PC-3 (cell line): ENCODE measurements at regions of chrX and their contacts with region 1.

Region 1: DNA sequence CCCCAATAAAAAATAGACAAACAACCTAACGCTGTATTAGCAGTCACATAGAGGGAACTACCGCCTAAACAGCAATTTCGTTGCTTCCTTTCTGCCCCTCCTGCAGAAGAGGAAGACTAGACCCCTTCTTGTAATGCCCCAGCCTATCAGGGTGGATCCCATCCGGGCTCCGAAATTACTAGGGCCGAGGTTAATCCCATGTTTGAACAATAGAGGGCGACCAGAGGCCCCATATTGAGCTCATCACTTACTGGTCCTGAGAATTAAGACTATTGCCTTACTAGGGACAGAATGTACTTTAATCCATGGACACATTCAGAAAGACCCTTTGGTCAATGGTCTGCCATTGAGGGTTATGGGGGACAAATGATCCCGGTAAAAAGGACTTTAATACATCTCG is 11.8 kb upstream of the ZNF630 start:
- DNase-seq: peak; percentile 73
- ATAC-seq: peak; percentile 78
- H3K4me3 ChIP-seq: no peak overlapping the region
- H3K27ac ChIP-seq: peak overlapping the region; percentile 50
- H3K4me1 ChIP-seq: peaks cover 18% of the 10 kb centered on the region; the same call in 1 of the 2 replicates
- H3K27me3 ChIP-seq: no peaks in the 10 kb centered on the region
- CTCF ChIP-seq: peak; percentile 76

Region 2: DNA sequence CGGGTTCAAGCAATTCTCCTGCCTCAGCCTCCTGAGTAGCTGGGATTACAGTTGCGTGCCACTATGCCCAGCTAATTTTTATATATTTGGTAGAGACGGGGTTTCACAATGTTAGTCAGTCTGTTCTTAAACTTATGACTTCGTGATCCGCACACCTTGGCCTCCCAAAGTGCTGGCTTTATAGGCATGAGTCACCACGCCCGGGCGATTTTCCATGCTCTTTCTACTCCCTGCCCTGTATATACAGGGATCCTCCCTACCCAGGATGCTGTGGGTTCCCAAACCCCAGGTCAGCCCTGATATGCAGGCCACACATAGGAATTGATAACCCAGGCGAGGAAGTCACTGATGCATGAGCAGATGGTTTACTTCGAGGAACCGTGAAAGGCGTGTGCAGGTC is 82.0 kb after region 1 on chrX:
- CTCF ChIA-PET with region 1: no interaction called
- POLR2A ChIA-PET with region 1: no interaction called
- intact Hi-C with region 1: loop called (anchors 1 kb)
- DNase-seq: peak; percentile 90
- ATAC-seq: peak; percentile 99
- H3K4me3 ChIP-seq: no peak overlapping the region
- H3K27ac ChIP-seq: peak overlapping the region; percentile 90
- H3K4me1 ChIP-seq: peaks cover 17% of the 10 kb centered on the region
- H3K27me3 ChIP-seq: no peaks in the 10 kb centered on the region
- CTCF ChIP-seq: no peak

Region 3: GRCh38 chrX:48278958-48279357 is 195.7 kb after region 1 on chrX:
- CTCF ChIA-PET with region 1: no interaction called
- POLR2A ChIA-PET with region 1: no interaction called
- intact Hi-C with region 1: loop called (anchors 10 kb)
- DNase-seq: peak; percentile 2
- ATAC-seq: no peak
- H3K4me3 ChIP-seq: no peak overlapping the region
- H3K27ac ChIP-seq: no peak overlapping the region
- H3K4me1 ChIP-seq: no peaks in the 10 kb centered on the region
- H3K27me3 ChIP-seq: no peaks in the 10 kb centered on the region
- CTCF ChIP-seq: no peak

Region 4: GRCh38 chrX:48493890-48494364 is 410.7 kb after region 1 on chrX:
- CTCF ChIA-PET with region 1: interaction called, 4 read pairs
- POLR2A ChIA-PET with region 1: no interaction called
- intact Hi-C with region 1: loop called (anchors 1 kb)
- DNase-seq: peak; percentile 48
- ATAC-seq: no peak
- H3K4me3 ChIP-seq: no peak overlapping the region
- H3K27ac ChIP-seq: no peak overlapping the region
- H3K4me1 ChIP-seq: peaks cover 49% of the 10 kb centered on the region
- H3K27me3 ChIP-seq: no peaks in the 10 kb centered on the region
- CTCF ChIP-seq: peak; percentile 59

Region 5: GRCh38 chrX:48511561-48511960 is 428.3 kb after region 1 on chrX:
- CTCF ChIA-PET with region 1: no interaction called
- POLR2A ChIA-PET with region 1: no interaction called
- intact Hi-C with region 1: loop called (anchors 1 kb)
- DNase-seq: peak; percentile 69
- ATAC-seq: peak; percentile 37; the same call in 1 of the 2 replicates
- H3K4me3 ChIP-seq: no peak overlapping the region
- H3K27ac ChIP-seq: no peak overlapping the region
- H3K4me1 ChIP-seq: peaks cover 11% of the 10 kb centered on the region; the same call in 1 of the 2 replicates
- H3K27me3 ChIP-seq: no peaks in the 10 kb centered on the region
- CTCF ChIP-seq: peak; percentile 67